BJ (cell line): ENCODE measurements at regions of chr11 and their contacts with region 1.

Region 1: DNA sequence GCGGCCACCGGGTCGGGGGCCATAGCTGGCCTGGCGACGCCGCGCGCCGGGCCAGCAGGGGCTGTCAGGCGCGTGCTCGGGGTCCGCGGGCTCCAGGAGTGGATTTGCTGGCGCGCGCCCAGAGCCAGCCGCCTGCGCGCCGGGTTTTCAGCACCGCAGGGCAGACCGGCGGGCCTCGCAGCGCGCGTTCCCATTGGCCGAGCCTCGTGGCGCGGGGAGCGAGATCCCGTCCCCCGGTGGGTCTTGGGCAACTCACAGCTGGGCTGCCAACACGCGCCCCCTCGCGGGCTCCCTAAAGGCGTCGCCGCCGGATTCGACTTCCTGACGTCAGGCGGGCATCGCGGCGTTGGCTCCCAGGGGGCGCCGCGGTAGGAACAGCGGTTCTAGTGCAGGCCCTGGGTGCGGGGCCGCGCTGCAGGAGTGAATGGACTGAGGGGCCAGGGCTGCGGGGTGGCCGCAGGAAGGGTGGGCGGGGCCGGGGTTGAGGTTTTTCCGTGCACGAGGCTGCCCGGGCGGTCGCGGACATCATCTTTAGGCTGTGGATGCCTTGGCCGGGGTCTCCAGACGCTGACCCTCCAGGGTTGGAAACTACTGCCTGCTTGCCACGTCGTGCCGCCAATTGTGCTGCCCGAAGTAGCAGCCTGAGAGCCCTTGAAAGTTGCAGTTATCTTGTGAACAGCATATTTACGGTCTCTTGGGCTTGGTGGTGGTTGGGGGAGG is at the start of gene FADS1:
- DNase-seq: peak; percentile 45
- H3K4me3 ChIP-seq: peak within 1 kb of the TSS; percentile 65
- H3K27me3 ChIP-seq: no peaks in the 10 kb centered on the region
- CTCF ChIP-seq: peak; percentile 77
- polyA plus RNA-seq, gene FADS1: 48.1 and 58.0 TPM in 2 replicates

Region 2: DNA sequence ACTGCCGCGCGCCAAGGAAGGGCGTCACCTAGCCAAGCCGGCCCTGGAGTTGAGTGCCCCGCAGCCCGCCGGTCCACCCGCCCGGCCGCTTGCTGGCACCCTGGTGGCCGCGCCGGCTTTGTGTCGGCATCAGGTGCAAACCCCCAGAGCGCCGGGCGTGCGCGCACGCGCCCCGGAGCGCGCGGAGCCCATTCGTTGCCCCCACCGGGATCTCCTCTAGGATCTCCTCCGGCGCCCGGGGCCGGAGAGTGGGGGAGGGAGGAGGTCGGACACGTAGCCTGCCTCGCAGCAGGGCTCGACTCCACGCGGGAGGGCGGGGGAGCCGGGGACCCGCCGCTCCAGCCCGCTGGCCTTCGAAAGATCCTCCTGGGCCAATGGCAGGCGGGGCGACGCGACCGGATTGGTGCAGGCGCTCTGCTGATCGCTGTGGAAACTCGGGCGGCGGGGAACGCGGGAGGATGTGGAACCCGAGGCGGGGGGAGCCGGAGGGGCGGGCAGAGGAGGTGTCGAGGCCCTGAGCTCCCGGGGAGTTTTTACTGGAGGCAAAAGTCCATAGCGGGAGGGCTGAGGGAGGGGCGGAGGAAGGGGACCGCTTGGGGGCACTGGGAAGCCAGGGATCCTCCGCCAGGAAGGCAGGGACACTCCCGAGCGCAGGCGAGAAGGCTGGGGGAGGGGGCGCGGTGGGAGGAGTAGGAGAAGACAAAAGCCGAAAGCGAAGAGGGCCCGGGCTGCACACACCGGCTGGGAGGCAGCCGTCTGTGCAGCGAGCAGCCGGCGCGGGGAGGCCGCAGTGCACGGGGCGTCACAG is 10.9 kb after region 1 on chr11 and contains the start of gene FADS2:
- CTCF ChIA-PET with region 1: interaction called, 22 read pairs
- POLR2A ChIA-PET with region 1: interaction called, 7 read pairs
- DNase-seq: peak; percentile 81
- H3K4me3 ChIP-seq: peak within 1 kb of the TSS; percentile 82
- H3K27me3 ChIP-seq: no peaks in the 10 kb centered on the region
- CTCF ChIP-seq: peak; percentile 16; the same call in 1 of the 2 replicates
- polyA plus RNA-seq, gene FADS2: 181 and 327 TPM in 2 replicates